ENCODE measurements at regions of chr9 and their contacts with region 1.

Region 1: GRCh38 chr9:97468658-97469448 is 32.6 kb upstream of the TMOD1 start:
- DNase-seq: peak; percentile 42 to 79 (median 64)
- ATAC-seq: peak; percentile 97
- H3K4me3 ChIP-seq: no peak overlapping the region
- H3K4me1 ChIP-seq: no peaks in the 10 kb centered on the region
- CTCF ChIP-seq: peak; percentile 18

Region 2: GRCh38 chr9:97598461-97599288 is 129.8 kb after region 1 on chr9:
- intact Hi-C with region 1: loop called (anchors 5 to 10 kb)
- DNase-seq: peak in 2 of 3 donors; percentile 51 to 93
- ATAC-seq: peak; percentile 90
- H3K4me3 ChIP-seq: no peak overlapping the region
- H3K4me1 ChIP-seq: peaks cover 6% of the 10 kb centered on the region
- CTCF ChIP-seq: peak; percentile 79

Region 3: DNA sequence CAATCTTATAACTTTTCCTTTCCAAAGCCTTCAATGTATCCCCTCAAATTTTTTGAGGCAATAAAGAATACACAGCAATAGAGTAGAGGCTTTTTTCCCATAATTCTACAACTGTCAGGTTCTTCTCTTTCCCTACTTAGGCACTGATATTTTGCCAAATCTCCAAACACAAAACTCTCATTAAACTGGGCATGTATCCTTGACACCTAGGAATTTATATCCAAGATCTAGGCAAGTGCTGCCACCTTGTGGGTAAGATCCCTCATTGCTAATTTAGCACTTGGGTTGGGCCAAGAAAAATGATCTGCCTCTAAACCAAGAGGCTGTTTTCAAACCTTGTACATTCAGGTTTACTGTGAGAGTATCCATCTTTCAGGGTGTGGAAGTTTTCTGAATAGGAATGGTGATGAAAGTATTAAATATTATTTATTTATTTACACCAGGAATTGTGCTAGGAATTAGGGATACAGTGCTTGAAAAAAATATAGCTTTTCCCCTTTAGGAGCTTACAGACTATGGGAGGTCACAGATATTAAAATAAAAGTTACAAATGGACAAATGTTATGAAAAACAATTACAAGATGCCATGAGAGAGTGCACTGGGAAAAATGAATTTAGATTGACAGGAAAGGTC is 146.7 kb after region 1 on chr9:
- intact Hi-C with region 1: loop called in 1 of 2 experiments (anchors 5 kb)
- DNase-seq: peak in 1 of 3 donors; percentile 84
- ATAC-seq: peak; percentile 86
- H3K4me3 ChIP-seq: no peak overlapping the region
- H3K4me1 ChIP-seq: no peaks in the 10 kb centered on the region
- CTCF ChIP-seq: peak; percentile 46